B cell (primary cell): ENCODE measurements at regions of chr20 and their contacts with region 1.

Region 1: DNA sequence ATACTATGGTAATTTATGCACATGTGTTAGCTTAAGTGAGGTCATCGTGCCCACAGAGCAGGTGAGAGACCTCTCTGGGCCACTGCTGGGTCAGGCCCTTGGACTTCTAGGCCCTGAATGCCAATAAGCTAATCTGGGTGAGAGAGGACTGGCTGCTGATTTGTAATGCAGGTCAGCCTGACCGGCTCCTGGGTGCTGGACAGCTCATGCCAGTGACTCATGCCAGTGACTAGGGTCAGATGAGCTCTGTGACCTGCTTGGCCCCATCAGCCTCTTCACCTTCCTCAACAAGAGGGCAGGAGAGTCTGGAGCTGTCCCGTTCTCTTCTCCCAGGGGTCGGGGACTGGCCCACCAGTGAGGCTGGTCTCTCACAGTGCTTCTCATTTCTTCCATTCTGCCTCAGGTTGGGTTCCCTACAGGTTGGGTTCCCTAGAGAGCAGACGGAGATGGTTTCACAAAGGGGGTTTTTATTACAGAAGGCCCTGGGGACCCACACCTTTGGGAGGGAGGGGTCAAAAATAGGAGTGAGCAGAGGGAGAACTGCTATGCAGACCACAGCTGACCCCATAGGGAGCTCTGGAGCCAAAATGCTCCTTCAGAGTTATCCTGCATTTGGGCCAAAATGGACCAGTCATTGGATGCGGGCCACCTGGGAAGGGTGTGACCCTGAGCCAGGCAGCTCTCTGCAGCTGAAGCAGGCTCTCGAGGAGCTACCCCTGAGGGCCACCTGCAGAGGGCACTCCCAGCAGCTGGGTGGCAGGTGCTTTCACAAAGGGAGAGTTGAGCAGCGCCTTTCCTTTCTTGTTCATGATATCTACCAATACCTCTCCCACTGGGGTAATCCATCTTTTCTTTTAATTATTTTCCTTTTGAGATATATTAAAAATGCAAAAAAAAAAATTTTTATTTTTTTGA is 2.2 kb upstream of the OXT start:
- DNase-seq: peak; percentile 53
- ATAC-seq: peak; percentile 25
- H3K4me3 ChIP-seq: no peak overlapping the region
- H3K4me3 Mint-ChIP-seq: no peak overlapping the region
- H3K27ac ChIP-seq: no peak overlapping the region
- H3K27ac Mint-ChIP-seq: no peak overlapping the region
- H3K4me1 ChIP-seq: peaks cover 14 to 15% of the 10 kb centered on the region in 2 donors
- H3K4me1 Mint-ChIP-seq: peaks cover 31% of the 10 kb centered on the region
- H3K27me3 ChIP-seq: peaks cover 0 to 12% (median 2%) of the 10 kb centered on the region in 4 experiments
- H3K27me3 Mint-ChIP-seq: no peaks in the 10 kb centered on the region
- CTCF ChIP-seq: peak; percentile 23

Region 2: GRCh38 chr20:3010985-3011723 is 58.1 kb before region 1 on chr20:
- CTCF ChIA-PET with region 1: no interaction called
- POLR2A ChIA-PET with region 1: no interaction called
- intact Hi-C with region 1: no loop called
- DNase-seq: no peak
- ATAC-seq: no peak
- H3K4me3 ChIP-seq: no peak overlapping the region
- H3K4me3 Mint-ChIP-seq: no peak overlapping the region
- H3K27ac ChIP-seq: no peak overlapping the region
- H3K27ac Mint-ChIP-seq: no peak overlapping the region
- H3K4me1 ChIP-seq: no peaks in the 10 kb centered on the region
- H3K4me1 Mint-ChIP-seq: no peaks in the 10 kb centered on the region
- H3K27me3 ChIP-seq: no peaks in the 10 kb centered on the region
- H3K27me3 Mint-ChIP-seq: no peaks in the 10 kb centered on the region
- CTCF ChIP-seq: no peak

Region 3: DNA sequence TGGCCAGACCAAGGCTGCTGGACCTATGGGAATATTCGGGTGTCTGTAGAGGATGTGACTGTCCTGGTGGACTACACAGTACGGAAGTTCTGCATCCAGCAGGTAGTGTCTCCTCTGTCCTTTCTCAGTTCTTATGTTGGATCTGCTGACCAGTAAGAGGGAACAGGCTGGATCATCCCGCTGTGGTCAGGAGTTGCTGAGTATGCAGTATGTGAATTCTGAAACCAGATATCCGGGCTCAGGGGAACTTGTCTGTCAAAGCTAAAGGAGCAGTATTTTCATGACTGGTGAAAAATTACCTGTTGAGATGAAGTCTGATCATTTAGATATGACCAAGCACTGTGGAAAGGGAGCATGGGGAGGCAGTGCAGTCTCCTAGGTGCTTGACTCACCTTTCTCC is 47.9 kb before region 1 on chr20:
- CTCF ChIA-PET with region 1: no interaction called
- POLR2A ChIA-PET with region 1: no interaction called
- intact Hi-C with region 1: no loop called
- DNase-seq: no peak
- ATAC-seq: no peak
- H3K4me3 ChIP-seq: no peak overlapping the region
- H3K4me3 Mint-ChIP-seq: no peak overlapping the region
- H3K27ac ChIP-seq: no peak overlapping the region
- H3K27ac Mint-ChIP-seq: no peak overlapping the region
- H3K4me1 ChIP-seq: no peaks in the 10 kb centered on the region
- H3K4me1 Mint-ChIP-seq: no peaks in the 10 kb centered on the region
- H3K27me3 ChIP-seq: no peaks in the 10 kb centered on the region
- H3K27me3 Mint-ChIP-seq: no peaks in the 10 kb centered on the region
- CTCF ChIP-seq: no peak

Region 4: GRCh38 chr20:3037654-3038053 is 31.6 kb before region 1 on chr20:
- CTCF ChIA-PET with region 1: no interaction called
- POLR2A ChIA-PET with region 1: no interaction called
- intact Hi-C with region 1: no loop called
- DNase-seq: no peak
- ATAC-seq: no peak
- H3K4me3 ChIP-seq: no peak overlapping the region
- H3K4me3 Mint-ChIP-seq: no peak overlapping the region
- H3K27ac ChIP-seq: no peak overlapping the region
- H3K27ac Mint-ChIP-seq: no peak overlapping the region
- H3K4me1 ChIP-seq: no peaks in the 10 kb centered on the region
- H3K4me1 Mint-ChIP-seq: no peaks in the 10 kb centered on the region
- H3K27me3 ChIP-seq: no peaks in the 10 kb centered on the region
- H3K27me3 Mint-ChIP-seq: no peaks in the 10 kb centered on the region
- CTCF ChIP-seq: no peak

Region 5: GRCh38 chr20:3051385-3052019 is 17.7 kb before region 1 on chr20:
- CTCF ChIA-PET with region 1: interaction called, 21 read pairs
- POLR2A ChIA-PET with region 1: no interaction called
- intact Hi-C with region 1: loop called (anchors 1 kb)
- DNase-seq: no peak
- ATAC-seq: no peak
- H3K4me3 ChIP-seq: no peak overlapping the region
- H3K4me3 Mint-ChIP-seq: no peak overlapping the region
- H3K27ac ChIP-seq: no peak overlapping the region
- H3K27ac Mint-ChIP-seq: no peak overlapping the region
- H3K4me1 ChIP-seq: peaks cover 6 to 7% of the 10 kb centered on the region in 2 donors
- H3K4me1 Mint-ChIP-seq: peaks cover 7% of the 10 kb centered on the region
- H3K27me3 ChIP-seq: no peaks in the 10 kb centered on the region
- H3K27me3 Mint-ChIP-seq: no peaks in the 10 kb centered on the region
- CTCF ChIP-seq: no peak

Region 6: DNA sequence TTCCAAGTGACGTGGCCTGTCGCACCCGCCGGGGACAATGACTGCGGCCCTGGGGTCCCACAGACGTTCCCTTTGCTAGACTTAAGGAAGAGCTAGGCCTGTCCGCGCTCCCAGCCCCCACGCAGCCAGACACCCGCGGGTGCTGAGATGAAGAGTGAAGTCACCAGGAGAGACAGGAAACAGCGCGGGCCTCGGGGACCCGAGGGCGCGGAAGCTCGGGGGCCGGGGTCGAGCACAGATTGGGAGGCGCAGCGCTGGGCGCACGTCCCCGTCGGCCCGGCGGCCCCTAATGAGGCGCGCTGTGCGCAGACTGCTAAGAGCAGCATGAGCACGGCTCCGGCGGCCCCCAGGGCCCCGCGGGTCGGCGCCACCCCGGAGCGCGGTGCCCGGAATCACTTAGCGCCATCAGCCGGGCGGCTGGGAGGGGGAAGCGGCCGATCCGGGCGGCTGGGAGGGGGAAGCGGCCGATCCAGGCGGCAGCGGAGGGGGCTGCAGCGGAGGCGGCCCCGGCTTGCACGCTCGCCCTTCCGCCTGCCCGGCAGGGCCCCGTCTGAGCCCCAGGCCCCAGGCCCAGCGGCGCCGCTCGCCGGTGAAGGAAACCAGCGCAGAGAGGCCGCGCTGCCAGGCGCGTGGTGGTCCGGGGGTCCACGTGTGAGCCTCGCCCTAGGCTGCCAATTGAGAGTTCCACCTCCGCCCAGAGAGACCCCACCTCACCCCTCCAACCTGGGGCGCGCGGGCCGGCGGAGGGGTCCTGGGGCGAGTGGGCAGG is 23.6 kb after region 1 on chr20:
- CTCF ChIA-PET with region 1: interaction called, 4 read pairs
- POLR2A ChIA-PET with region 1: interaction called, 12 read pairs
- intact Hi-C with region 1: no loop called
- DNase-seq: peak; percentile 73
- ATAC-seq: peak; percentile 59
- H3K4me3 ChIP-seq: peak overlapping the region in 4 of 5 experiments; percentile 44 to 73 (median 58)
- H3K4me3 Mint-ChIP-seq: peak overlapping the region; percentile 93
- H3K27ac ChIP-seq: peak overlapping the region; percentile 58 to 68
- H3K27ac Mint-ChIP-seq: peak overlapping the region; percentile 97
- H3K4me1 ChIP-seq: peaks cover 18 to 27% of the 10 kb centered on the region in 2 donors
- H3K4me1 Mint-ChIP-seq: peaks cover 24% of the 10 kb centered on the region
- H3K27me3 ChIP-seq: peaks cover 0 to 12% (median 6%) of the 10 kb centered on the region in 4 experiments
- H3K27me3 Mint-ChIP-seq: peaks cover 21% of the 10 kb centered on the region
- CTCF ChIP-seq: no peak

Region 7: DNA sequence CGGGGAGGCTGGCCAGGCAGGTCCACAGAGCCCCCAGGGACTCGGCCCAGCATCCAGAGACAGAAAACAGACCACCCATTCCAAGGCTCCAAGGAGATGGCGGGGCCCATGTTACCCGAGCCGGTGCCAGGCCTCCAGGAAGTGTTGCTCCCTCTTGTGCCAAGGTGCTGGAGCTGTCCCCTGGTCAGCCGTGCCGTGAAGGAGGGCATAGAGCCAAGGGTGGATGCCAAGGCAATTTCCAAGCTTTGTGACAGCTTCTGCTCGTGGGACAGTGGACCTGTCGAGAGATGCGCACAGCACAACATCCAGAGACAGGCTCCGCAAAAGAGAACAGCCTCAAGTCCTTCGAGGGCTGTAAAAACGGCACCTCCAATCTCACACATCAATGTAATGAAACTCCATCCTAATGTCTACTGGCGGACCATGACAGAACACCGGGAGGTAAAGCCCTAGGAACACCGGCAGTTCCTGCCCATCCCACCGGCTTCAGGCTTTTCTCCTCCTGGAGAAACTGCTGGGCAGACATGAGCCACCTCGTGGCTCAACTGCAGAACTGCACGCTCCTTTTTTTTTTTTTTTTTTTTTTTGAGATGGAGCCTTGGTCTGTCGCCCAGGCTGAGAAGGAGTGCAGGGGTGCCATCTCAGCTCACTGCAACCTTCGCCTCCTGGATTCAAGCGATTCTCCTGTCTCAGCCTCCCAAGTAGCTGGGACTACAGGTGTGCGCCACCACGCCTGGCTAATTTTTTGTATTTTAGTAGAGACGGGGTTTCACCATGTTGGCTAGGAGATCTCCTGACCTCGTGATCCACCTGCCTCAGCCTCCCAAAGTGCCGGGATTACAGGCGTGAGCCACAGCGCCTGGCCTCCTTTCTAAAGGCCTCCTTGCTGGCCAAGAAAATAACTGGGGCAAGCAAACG is 46.2 kb after region 1 on chr20:
- CTCF ChIA-PET with region 1: interaction called, 43 read pairs
- POLR2A ChIA-PET with region 1: no interaction called
- intact Hi-C with region 1: loop called (anchors 5 kb)
- DNase-seq: peak; percentile 73
- ATAC-seq: peak; percentile 69
- H3K4me3 ChIP-seq: no peak overlapping the region
- H3K4me3 Mint-ChIP-seq: no peak overlapping the region
- H3K27ac ChIP-seq: no peak overlapping the region
- H3K27ac Mint-ChIP-seq: no peak overlapping the region
- H3K4me1 ChIP-seq: peaks cover 0 to 4% of the 10 kb centered on the region in 2 donors
- H3K4me1 Mint-ChIP-seq: peaks cover 9% of the 10 kb centered on the region
- H3K27me3 ChIP-seq: no peaks in the 10 kb centered on the region
- H3K27me3 Mint-ChIP-seq: no peaks in the 10 kb centered on the region
- CTCF ChIP-seq: peak; percentile 85

Region 8: DNA sequence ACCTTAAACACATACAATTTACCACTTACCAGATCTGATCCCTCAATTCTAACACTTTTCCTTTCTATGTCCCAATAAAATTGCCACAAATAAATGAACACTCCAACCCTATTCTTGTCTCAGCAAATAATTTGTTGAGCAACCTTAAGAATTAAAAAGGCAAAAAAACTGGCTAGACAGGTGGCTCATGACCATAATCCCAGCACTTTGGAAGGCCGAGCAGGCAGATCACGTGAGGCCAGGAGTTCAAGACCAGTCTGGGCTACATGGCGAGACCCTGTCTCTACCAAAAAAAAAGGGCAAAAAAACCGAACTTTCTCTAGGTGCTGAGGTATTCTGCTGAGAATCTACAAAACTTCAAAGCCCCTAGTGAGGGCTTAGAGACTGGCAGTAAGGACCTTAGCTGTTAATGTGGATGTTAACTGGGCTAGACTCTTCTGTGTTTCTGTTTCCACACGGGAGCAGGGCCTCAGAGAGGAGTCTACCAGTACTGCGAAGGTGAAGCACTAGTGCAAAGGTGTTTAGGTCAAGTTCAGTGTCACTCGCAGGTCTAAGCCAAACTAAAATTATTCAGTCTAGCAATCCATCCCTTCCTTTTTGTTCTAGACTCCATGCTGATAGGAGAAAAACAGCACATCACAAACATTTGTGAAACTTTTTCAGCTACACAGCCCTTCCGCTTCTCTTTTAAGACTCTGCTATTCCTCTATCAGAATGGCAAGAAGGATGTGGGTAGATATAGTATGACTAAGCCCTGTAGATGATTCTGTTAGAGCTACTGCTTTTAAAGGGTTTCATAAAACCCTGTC is 87.8 kb after region 1 on chr20:
- CTCF ChIA-PET with region 1: no interaction called
- POLR2A ChIA-PET with region 1: no interaction called
- intact Hi-C with region 1: loop called (anchors 10 kb)
- DNase-seq: peak; percentile 24
- ATAC-seq: peak; percentile 23
- H3K4me3 ChIP-seq: no peak overlapping the region
- H3K4me3 Mint-ChIP-seq: peak overlapping the region; percentile 67
- H3K27ac ChIP-seq: peak overlapping the region; percentile 1 to 48
- H3K27ac Mint-ChIP-seq: peak overlapping the region; percentile 74
- H3K4me1 ChIP-seq: peaks cover 34 to 38% of the 10 kb centered on the region in 2 donors
- H3K4me1 Mint-ChIP-seq: peaks cover 61% of the 10 kb centered on the region
- H3K27me3 ChIP-seq: no peaks in the 10 kb centered on the region
- H3K27me3 Mint-ChIP-seq: no peaks in the 10 kb centered on the region
- CTCF ChIP-seq: no peak

Region 9: DNA sequence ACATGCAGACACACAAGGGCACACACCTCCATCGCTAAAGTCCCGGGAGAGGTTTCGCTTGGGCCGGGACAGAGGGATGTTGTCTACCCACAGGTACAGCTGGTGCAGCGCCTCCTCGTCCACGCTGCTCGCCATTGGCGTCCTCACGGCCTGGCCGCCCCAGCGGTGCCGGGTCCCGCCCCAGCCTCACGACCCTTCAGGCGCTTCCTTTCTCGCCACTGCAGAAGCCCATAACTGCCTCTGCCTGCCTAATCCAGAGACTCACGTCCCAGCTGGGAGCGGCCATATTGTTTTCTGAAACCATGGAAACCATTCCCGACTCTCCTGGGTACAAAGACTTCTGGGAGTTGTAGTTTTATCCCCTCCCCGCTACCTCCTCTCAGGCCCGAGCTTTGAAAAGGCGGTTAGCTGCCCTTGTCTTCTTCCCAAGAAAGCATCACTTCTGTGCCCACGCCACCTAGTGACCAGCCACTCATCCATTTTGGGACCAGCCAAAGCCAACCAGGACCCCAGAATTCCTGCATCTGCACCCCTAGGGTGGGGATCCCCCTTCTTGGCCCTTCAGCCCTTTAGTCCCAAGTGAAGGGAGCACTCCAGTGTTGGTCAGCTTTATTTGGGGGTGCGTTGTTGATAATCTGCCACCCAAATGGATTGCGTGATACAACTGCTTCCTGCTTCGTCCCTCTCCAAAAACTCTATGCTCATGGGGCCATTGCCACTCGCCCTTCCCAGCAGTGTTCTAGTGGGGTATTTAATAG is 712.1 kb after region 1 on chr20 and contains the start of gene SPEF1:
- CTCF ChIA-PET with region 1: no interaction called
- POLR2A ChIA-PET with region 1: no interaction called
- intact Hi-C with region 1: no loop called
- DNase-seq: peak; percentile 78
- ATAC-seq: peak; percentile 64
- H3K4me3 ChIP-seq: peak within 1 kb of the TSS in 3 of 5 experiments; percentile 36 to 49 (median 38)
- H3K4me3 Mint-ChIP-seq: peak within 1 kb of the TSS; percentile 79
- H3K27ac ChIP-seq: no peak within 1 kb of the TSS
- H3K27ac Mint-ChIP-seq: peak within 1 kb of the TSS; percentile 32
- H3K4me1 ChIP-seq: peaks cover 29 to 45% of the 10 kb centered on the region in 2 donors
- H3K4me1 Mint-ChIP-seq: peaks cover 52% of the 10 kb centered on the region
- H3K27me3 ChIP-seq: peaks cover 0 to 15% (median 4%) of the 10 kb centered on the region in 4 experiments
- H3K27me3 Mint-ChIP-seq: no peaks in the 10 kb centered on the region
- CTCF ChIP-seq: no peak
- total RNA-seq, gene SPEF1: not detected in 2 replicates